SK-N-SH (cell line): ENCODE measurements at regions of chr11 and their contacts with region 1.

Region 1: DNA sequence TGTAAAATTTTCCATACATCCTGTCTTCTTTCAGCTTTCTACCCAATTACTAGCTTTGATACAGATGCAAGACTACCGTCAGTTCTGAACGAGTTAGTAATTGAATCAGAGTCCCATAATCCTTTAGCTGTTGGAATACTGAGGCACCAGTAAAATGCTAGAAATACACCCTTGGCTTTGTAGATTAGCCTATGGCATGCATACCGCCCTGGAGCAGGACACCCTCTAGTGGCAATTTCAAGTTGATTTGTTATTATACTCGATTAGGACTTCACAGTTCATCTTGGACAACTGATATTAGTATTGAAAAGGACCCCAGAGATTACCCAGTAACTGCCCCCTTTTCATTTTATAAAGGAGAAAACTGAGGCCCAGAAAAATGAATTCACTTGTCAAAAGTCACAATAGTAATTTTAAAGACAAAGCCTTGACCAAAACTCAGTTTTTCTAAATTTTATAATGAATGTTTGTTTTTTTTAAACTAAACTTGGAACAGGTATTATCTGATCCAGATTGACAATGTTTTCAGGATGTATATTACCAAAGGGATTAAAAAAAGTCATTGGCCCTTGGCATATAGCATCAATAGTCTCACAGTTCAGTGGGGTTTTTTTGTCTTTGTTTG is 72.6 kb downstream of the HIPK3 start:
- DNase-seq: peak; percentile 54
- H3K4me3 ChIP-seq: no peak overlapping the region; a peak in 1 of 4 replicates
- H3K27ac ChIP-seq: no peak overlapping the region
- H3K4me1 ChIP-seq: peaks cover 0 to 18% of the 10 kb centered on the region in 2 experiments; a peak in 2 of 4 replicates
- H3K27me3 ChIP-seq: no peaks in the 10 kb centered on the region
- CTCF ChIP-seq: peak; percentile 77
- EP300 ChIP-seq: no peak
- RAD21 ChIP-seq: peak; percentile 86

Region 2: DNA sequence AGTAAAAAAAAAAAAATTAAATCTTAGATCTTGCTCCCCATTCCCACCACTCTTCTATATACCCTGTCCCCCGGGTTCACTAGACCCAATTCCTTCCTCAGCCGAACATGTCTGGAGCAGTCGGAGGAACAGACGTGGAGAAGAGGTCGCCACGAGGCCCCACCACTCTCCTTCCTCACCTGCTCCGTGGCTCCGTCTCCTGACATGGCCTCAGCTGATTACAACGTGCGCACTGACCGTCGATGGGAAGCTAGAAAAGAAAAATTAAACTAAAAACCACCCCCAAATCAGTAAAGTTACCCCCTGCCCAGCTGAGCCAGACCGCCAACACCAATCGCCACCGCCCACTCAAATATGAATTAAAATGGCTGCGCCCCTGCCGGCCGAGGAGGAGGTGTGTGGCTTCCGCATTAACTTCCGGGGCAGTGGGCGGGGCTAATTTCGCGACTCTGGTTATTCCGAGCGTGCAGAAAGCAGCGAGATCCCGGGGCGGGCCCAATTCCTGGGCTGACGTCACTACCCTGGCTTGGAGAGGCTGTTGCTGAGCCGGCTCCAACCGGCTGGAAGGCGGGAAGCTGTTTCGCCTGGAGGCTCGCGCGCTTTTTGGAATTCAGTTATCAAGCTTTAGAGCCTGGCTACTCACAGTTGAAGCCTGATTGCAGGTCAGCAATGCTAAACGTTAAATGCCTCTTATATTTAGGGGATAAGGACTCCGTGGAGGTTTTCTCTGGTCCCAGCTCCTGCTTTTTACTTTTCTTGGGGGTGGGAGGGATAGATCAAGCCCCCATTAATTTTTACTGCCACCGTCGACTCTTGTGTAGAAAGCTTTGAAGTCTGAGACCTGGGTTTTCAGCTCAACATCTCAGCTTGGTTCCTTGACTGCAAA is 168.5 kb before region 1 on chr11 and contains the start of gene CSTF3:
- CTCF ChIA-PET with region 1: interaction called, 37 read pairs
- POLR2A ChIA-PET with region 1: no interaction called
- DNase-seq: peak; percentile 93
- H3K4me3 ChIP-seq: peak within 1 kb of the TSS; percentile 77 to 86
- H3K27ac ChIP-seq: peak within 1 kb of the TSS; percentile 84 to 88
- H3K4me1 ChIP-seq: peaks cover 2 to 31% of the 10 kb centered on the region in 2 experiments; a peak in 3 of 4 replicates
- H3K27me3 ChIP-seq: no peaks in the 10 kb centered on the region
- CTCF ChIP-seq: no peak; the same call in 1 of the 2 replicates
- EP300 ChIP-seq: peak; percentile 36 to 38; a peak in 2 of 4 replicates
- RAD21 ChIP-seq: no peak
- polyA plus RNA-seq, gene CSTF3: 26.3 and 34.6 TPM in 2 replicates

Region 3: DNA sequence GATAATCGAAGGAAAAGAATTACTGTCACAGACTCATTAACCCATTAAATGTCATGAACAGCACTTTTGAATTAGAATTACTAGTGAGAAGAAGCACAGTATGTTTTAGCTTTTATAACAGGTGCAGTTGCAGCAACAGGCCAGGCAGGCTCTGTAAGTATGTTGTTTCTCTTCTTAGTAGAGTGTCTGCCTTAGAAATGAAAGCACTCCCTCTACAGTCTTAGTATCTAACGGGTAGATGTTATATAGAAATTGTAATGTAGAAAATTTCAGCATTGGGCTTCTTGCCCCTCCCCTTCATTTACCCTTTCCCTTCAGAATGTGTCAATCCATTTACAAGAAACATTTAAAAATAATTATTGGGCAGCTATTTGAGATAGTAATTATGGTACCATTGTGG is 14.8 kb after region 1 on chr11:
- CTCF ChIA-PET with region 1: interaction called, 11 read pairs
- POLR2A ChIA-PET with region 1: no interaction called
- DNase-seq: no peak
- H3K4me3 ChIP-seq: no peak overlapping the region
- H3K27ac ChIP-seq: no peak overlapping the region
- H3K4me1 ChIP-seq: no peaks in the 10 kb centered on the region; a peak in 1 of 4 replicates
- H3K27me3 ChIP-seq: no peaks in the 10 kb centered on the region
- CTCF ChIP-seq: 0 out of 2 replicates have a peak, but pooled peaks have one; percentile 17
- EP300 ChIP-seq: no peak
- RAD21 ChIP-seq: peak; percentile 28; the same call in 1 of the 2 replicates